A549 (cell line): ENCODE measurements at regions of chr1 and their contacts with region 1.

Region 1: GRCh38 chr1:207032528-207033017 is at the start of gene C1orf116:
- DNase-seq: peak; percentile 67 to 76
- ATAC-seq: peak; percentile 54 to 70; a peak in 4 of 6 replicates
- H3K4me3 ChIP-seq: peak within 1 kb of the TSS; percentile 33
- H3K27ac ChIP-seq: peak within 1 kb of the TSS; percentile 86 to 89
- H3K4me1 ChIP-seq: peaks cover 76% of the 10 kb centered on the region
- CTCF ChIP-seq: no peak
- EP300 ChIP-seq: no peak
- POLR2A ChIP-seq: no peak
- RAD21 ChIP-seq: no peak; a peak in 1 of 5 replicates
- polyA plus RNA-seq, gene C1orf116: 2.0 and 2.2 TPM in 2 replicates

Region 2: DNA sequence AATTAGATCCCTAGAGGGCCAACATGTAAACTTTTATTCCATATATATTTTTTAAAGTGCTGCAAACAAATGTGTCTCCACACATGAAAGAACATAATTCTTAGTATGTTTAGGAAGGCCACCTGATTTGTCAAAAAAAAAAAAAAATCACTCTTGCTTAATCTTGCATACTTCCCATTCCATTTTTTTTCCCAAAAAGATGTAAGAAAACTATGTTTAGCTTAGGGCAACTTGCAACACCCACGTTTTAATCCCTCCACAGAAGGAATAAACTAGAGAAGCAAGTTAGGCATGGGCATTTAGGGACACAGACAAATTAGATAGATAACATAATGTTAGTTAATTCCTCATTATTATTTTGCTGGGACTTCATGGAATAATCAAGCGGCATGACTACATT is 12.9 kb after region 1 on chr1:
- CTCF ChIA-PET with region 1: interaction called, 40 read pairs
- POLR2A ChIA-PET with region 1: interaction called, 3 read pairs
- DNase-seq: no peak
- ATAC-seq: no peak
- H3K4me3 ChIP-seq: no peak overlapping the region
- H3K27ac ChIP-seq: no peak overlapping the region
- H3K4me1 ChIP-seq: peaks cover 57% of the 10 kb centered on the region
- CTCF ChIP-seq: no peak
- EP300 ChIP-seq: no peak
- POLR2A ChIP-seq: no peak
- RAD21 ChIP-seq: no peak